Lower leg skin (tissue), 4 donors: ENCODE measurements at regions of chr15 and their contacts with region 1.

Region 1: DNA sequence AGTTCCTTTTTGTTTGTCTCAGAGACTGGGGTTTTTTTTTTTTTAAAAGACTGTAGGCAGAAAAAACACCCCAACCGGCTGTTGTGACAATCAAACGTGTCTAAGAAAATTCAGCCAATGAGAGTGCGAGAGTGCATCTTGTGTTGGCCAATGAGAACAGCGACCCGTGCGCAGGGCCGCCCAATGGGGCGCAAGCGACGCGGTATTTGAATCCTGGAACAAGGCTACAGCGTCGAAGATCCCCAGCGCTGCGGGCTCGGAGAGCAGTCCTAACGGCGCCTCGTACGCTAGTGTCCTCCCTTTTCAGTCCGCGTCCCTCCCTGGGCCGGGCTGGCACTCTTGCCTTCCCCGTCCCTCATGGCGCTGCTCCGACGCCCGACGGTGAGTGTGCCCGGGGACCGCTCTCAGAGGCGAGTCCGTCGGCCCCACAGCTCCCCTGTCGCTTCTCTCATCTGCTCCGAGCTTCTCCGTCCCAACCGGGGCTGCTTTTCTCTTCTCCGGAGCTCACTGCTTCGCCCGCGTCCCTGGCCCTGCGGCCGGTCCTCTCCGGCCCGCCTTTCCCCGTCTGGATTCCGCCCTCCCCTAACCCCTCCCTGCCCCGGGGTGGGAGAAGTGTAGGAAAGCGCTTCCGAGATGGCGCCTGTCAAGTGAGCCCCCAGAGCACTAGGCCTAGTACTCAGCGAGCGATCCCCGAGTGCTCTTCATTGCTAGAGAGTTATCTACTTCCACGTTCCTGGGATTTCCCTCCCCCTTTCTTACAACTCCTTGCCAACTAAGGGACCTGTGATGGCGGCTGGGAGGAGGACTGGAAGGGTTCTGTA is at the start of gene CCNB2:
- DNase-seq: peak; percentile 88 to 96
- H3K4me3 ChIP-seq: peak within 1 kb of the TSS; percentile 63
- CTCF ChIP-seq: no peak
- POLR2A ChIP-seq: no peak
- total RNA-seq, gene CCNB2: 3.3 to 7.6 (median 4.5) TPM

Region 2: GRCh38 chr15:59410391-59410896 is 305.3 kb after region 1 on chr15:
- intact Hi-C with region 1: loop called (anchors 10 kb)
- DNase-seq: no peak
- H3K4me3 ChIP-seq: no peak overlapping the region
- CTCF ChIP-seq: no peak
- POLR2A ChIP-seq: no peak